ENCODE measurements at regions of chr3 and their contacts with region 1.

Region 1: DNA sequence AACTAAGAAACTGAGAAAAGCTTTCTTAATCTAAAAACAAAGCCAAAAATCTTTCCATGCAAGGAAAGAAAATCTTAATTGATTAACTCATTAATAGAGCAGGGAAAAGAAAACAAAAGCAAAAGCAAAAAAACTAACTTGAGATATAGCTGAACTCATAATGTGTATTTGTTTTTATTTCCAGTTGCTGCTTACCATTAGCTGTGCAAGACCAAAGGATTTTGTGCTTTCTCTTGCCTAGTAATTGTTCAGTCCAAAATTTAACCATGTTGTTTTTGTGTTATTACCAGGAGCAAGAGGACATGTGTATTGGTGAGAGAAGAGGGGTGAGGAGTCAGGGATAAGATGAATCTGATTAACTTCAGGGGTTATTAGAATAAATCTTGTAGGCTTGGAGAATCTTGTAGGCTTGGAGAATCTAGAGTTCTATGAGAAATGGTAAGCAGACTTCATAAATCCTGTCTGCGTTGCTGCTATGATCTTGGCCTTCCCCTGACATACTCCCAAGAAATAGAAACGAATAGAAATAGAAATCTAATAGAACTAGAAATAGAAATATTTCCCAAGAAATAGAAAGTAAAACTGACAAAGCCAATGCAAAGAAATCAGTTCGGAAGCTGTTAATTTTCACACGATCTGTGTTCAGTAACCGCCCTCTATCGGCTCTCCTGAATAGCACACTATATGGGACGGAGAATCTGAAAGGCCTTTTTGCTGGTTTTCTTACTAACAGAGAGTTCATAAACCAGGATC is 72.6 kb upstream of the TNFSF10 start:
- DNase-seq: peak in 4 of 5 donors; percentile 24 to 65 (median 52)
- H3K4me3 ChIP-seq: peak overlapping the region; percentile 39
- H3K4me3 Mint-ChIP-seq: peak overlapping the region; percentile 80 to 91 (median 85)
- H3K27ac ChIP-seq: no peak overlapping the region
- H3K27ac Mint-ChIP-seq: peak overlapping the region; percentile 24 to 92 (median 83)
- H3K4me1 ChIP-seq: peaks cover 39% of the 10 kb centered on the region
- H3K4me1 Mint-ChIP-seq: peaks cover 42 to 52% (median 51%) of the 10 kb centered on the region in 3 donors
- H3K27me3 ChIP-seq: no peaks in the 10 kb centered on the region
- H3K27me3 Mint-ChIP-seq: no peaks in the 10 kb centered on the region

Region 2: GRCh38 chr3:172461530-172462138 is 134.2 kb before region 1 on chr3:
- CTCF ChIA-PET with region 1: interaction called, 13 read pairs
- POLR2A ChIA-PET with region 1: no interaction called
- DNase-seq: peak in 2 of 5 donors; percentile 9 to 16
- H3K4me3 ChIP-seq: no peak overlapping the region
- H3K4me3 Mint-ChIP-seq: no peak overlapping the region
- H3K27ac ChIP-seq: no peak overlapping the region
- H3K27ac Mint-ChIP-seq: no peak overlapping the region
- H3K4me1 ChIP-seq: no peaks in the 10 kb centered on the region
- H3K4me1 Mint-ChIP-seq: no peaks in the 10 kb centered on the region
- H3K27me3 ChIP-seq: no peaks in the 10 kb centered on the region
- H3K27me3 Mint-ChIP-seq: peaks cover 2 to 3% of the 10 kb centered on the region in 2 donors

Region 3: DNA sequence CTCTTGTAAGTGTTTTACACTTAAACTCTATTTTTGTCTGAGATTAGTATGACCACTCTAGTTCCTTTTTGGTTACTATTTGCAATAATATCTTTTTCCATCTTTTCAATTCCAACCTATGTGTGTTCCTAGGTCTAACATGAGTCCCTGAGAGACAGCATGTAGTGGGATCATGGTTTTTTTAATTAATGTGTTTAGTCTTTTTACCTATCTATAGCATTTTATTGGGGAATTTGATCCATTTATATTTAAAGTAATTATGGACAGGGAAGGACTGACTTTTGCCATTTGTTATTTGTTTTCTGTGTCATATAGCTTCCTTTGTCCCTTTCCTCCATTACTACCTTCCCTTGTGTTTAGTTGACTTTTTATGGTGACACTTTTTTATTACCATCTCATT is 94.3 kb before region 1 on chr3:
- CTCF ChIA-PET with region 1: interaction called, 39 read pairs
- POLR2A ChIA-PET with region 1: interaction called, 3 read pairs
- DNase-seq: no peak
- H3K4me3 ChIP-seq: no peak overlapping the region
- H3K4me3 Mint-ChIP-seq: no peak overlapping the region
- H3K27ac ChIP-seq: no peak overlapping the region
- H3K27ac Mint-ChIP-seq: no peak overlapping the region
- H3K4me1 ChIP-seq: no peaks in the 10 kb centered on the region
- H3K4me1 Mint-ChIP-seq: no peaks in the 10 kb centered on the region
- H3K27me3 ChIP-seq: no peaks in the 10 kb centered on the region
- H3K27me3 Mint-ChIP-seq: peaks cover 0 to 3% of the 10 kb centered on the region in 2 donors

Region 4: DNA sequence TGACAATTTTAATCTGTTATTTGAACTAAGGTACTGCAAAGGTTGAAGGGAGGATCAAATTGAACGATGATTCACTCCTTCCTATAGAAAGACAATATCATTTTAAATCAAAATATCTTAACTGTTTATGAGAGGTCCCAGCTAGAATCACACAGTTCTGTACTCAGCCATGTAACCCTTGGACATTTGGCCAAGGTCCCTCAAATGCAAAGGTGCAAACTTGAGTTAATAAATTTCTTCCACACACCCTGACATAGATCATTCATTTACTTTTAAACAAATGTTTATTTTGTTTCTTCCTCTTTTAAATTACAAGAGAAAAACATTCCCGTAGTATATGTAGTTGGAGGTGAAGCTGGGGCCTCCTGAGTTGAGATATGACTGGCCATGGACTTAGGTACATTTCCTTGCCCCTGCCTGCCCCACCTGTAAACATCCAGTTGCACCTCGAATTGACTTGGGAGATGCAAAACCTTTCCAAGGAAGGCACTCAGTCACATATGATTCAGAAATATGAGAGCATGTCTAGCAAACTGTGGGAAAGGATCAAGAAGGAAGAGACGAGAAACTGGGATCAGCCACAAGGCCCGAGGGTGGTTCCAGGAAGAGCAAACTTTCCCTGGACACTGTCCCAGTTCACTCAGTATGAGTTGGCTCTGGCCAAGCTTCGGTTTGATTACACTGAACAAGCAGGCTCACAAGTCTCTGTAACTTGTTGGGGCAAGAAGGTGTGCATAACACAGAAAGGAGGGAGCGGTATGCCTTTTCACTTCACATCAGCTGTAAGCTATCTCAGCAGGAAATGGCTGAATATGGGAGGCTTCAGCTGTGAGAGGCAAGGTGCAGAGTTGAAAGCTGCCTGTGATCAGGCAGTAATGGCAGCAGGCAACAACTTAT is 79.3 kb before region 1 on chr3:
- CTCF ChIA-PET with region 1: interaction called, 17 read pairs
- POLR2A ChIA-PET with region 1: interaction called, 4 read pairs
- DNase-seq: no peak
- H3K4me3 ChIP-seq: peak overlapping the region; percentile 21
- H3K4me3 Mint-ChIP-seq: peak overlapping the region; percentile 63 to 86 (median 77)
- H3K27ac ChIP-seq: no peak overlapping the region
- H3K27ac Mint-ChIP-seq: peak overlapping the region; percentile 66 to 96 (median 87)
- H3K4me1 ChIP-seq: peaks cover 86% of the 10 kb centered on the region
- H3K4me1 Mint-ChIP-seq: peaks cover 90 to 100% (median 98%) of the 10 kb centered on the region in 3 donors
- H3K27me3 ChIP-seq: no peaks in the 10 kb centered on the region
- H3K27me3 Mint-ChIP-seq: no peaks in the 10 kb centered on the region

Region 5: GRCh38 chr3:172607305-172608121 is 11.7 kb after region 1 on chr3:
- CTCF ChIA-PET with region 1: interaction called, 15 read pairs
- POLR2A ChIA-PET with region 1: no interaction called
- DNase-seq: no peak
- H3K4me3 ChIP-seq: no peak overlapping the region
- H3K4me3 Mint-ChIP-seq: no peak overlapping the region
- H3K27ac ChIP-seq: no peak overlapping the region
- H3K27ac Mint-ChIP-seq: peak overlapping the region in 1 of 8 donors; percentile 21
- H3K4me1 ChIP-seq: no peaks in the 10 kb centered on the region
- H3K4me1 Mint-ChIP-seq: no peaks in the 10 kb centered on the region
- H3K27me3 ChIP-seq: peaks cover 3% of the 10 kb centered on the region
- H3K27me3 Mint-ChIP-seq: peaks cover 0 to 1% of the 10 kb centered on the region in 2 donors

Region 6: GRCh38 chr3:172666873-172667694 is 71.3 kb after region 1 on chr3:
- CTCF ChIA-PET with region 1: interaction called, 13 read pairs
- POLR2A ChIA-PET with region 1: interaction called, 3 read pairs
- DNase-seq: peak; percentile 60 to 82 (median 68)
- H3K4me3 ChIP-seq: no peak overlapping the region
- H3K4me3 Mint-ChIP-seq: peak overlapping the region in 3 of 7 donors; percentile 30 to 70 (median 65)
- H3K27ac ChIP-seq: no peak overlapping the region
- H3K27ac Mint-ChIP-seq: peak overlapping the region in 1 of 8 donors; percentile 25
- H3K4me1 ChIP-seq: peaks cover 12% of the 10 kb centered on the region
- H3K4me1 Mint-ChIP-seq: peaks cover 22 to 32% (median 27%) of the 10 kb centered on the region in 3 donors
- H3K27me3 ChIP-seq: no peaks in the 10 kb centered on the region
- H3K27me3 Mint-ChIP-seq: no peaks in the 10 kb centered on the region